Endothelial cell of umbilical vein (primary cell): ENCODE measurements at regions of chr2 and their contacts with region 1.

Region 1: DNA sequence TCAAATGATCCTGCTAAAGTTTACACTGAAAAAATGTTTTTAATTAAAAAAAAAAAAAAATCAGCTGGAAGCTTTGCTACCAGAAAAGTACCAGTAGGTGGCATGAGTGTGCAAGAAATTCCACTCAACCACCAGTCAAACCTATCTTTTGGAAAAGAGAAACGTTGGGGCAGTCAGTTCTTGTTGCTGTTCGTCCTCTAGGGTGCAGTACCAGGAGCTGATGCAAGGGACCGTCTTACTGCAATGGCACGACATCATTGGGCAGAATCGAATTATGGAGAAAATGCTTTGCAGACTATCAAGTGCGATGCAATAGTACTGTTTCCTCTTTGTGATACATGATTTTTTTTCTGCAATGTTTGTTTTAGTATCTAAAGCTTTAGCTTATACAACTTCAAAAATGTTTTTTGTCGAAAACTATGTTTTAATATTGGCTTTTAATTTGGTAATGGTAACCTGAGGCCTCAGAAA is 18.3 kb downstream of the YPEL5 start:
- DNase-seq: peak; percentile 87
- H3K4me3 ChIP-seq: no peak overlapping the region
- H3K27ac ChIP-seq: no peak overlapping the region
- H3K4me1 ChIP-seq: no peaks in the 10 kb centered on the region
- H3K27me3 ChIP-seq: peaks cover 0 to 1% of the 10 kb centered on the region in 2 experiments
- CTCF ChIP-seq: peak; percentile 75 to 82
- POLR2A ChIP-seq: no peak

Region 2: GRCh38 chr2:30136764-30137444 is 28.2 kb before region 1 on chr2:
- CTCF ChIA-PET with region 1: interaction called, 11 read pairs
- POLR2A ChIA-PET with region 1: no interaction called
- dilution Hi-C with region 1: no loop called
- intact Hi-C with region 1: no loop called
- DNase-seq: peak; percentile 37
- H3K4me3 ChIP-seq: no peak overlapping the region
- H3K27ac ChIP-seq: no peak overlapping the region
- H3K4me1 ChIP-seq: peaks cover 4% of the 10 kb centered on the region
- H3K27me3 ChIP-seq: peaks cover 0 to 14% of the 10 kb centered on the region in 2 experiments
- CTCF ChIP-seq: no peak
- POLR2A ChIP-seq: no peak

Region 3: GRCh38 chr2:30178618-30179434 is 13.7 kb after region 1 on chr2:
- CTCF ChIA-PET with region 1: interaction called, 13 read pairs
- POLR2A ChIA-PET with region 1: no interaction called
- dilution Hi-C with region 1: no loop called
- intact Hi-C with region 1: no loop called
- DNase-seq: peak; percentile 34
- H3K4me3 ChIP-seq: no peak overlapping the region
- H3K27ac ChIP-seq: no peak overlapping the region
- H3K4me1 ChIP-seq: no peaks in the 10 kb centered on the region
- H3K27me3 ChIP-seq: no peaks in the 10 kb centered on the region
- CTCF ChIP-seq: no peak
- POLR2A ChIP-seq: no peak

Region 4: GRCh38 chr2:30231212-30231995 is 66.3 kb after region 1 on chr2 and contains the start of gene LBH:
- CTCF ChIA-PET with region 1: interaction called, 8 read pairs
- POLR2A ChIA-PET with region 1: no interaction called
- dilution Hi-C with region 1: no loop called
- intact Hi-C with region 1: loop called (anchors 5 kb)
- DNase-seq: peak; percentile 72
- H3K4me3 ChIP-seq: peak within 1 kb of the TSS; percentile 51 to 58 (median 53)
- H3K27ac ChIP-seq: no peak within 1 kb of the TSS
- H3K4me1 ChIP-seq: peaks cover 9% of the 10 kb centered on the region
- H3K27me3 ChIP-seq: peaks cover 21 to 22% of the 10 kb centered on the region in 2 experiments
- CTCF ChIP-seq: peak in 1 of 2 donors; percentile 3
- POLR2A ChIP-seq: peak; percentile 86
- total RNA-seq, gene LBH: 2.9 and 5.5 TPM in 2 replicates

Region 5: DNA sequence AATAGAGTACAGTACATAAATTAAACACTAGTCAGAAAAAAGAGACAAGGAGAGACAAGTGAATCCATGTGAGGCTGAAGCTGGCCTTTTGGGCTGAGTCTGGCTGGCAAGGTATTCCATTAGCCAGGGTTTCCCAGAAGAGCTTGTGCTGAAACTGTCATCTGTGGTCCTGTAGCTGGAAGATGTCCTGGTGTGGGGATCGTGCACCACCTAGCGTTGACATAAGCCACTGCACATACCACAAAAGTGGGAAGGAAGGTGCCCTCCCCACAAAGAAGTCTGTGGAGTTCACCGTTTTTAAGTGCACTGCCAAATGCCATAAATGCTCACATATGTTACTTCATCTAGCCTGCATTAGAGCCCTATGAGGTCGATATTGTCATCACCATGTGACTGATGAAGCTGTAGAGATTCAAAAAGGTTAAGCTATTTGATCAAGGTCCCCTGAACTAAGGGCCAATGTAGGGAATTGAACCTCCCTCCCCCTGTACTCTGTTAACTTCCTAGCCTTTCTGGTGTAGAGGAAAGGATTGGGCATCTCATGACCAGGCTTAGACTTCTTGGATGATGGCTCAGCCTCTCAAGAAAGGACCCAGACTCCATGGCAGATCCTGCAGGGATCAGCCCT is 1005.1 kb after region 1 on chr2:
- CTCF ChIA-PET with region 1: interaction called, 12 read pairs
- POLR2A ChIA-PET with region 1: no interaction called
- dilution Hi-C with region 1: no loop called
- intact Hi-C with region 1: loop called (anchors 1 kb)
- DNase-seq: peak; percentile 47
- H3K4me3 ChIP-seq: no peak overlapping the region
- H3K27ac ChIP-seq: no peak overlapping the region
- H3K4me1 ChIP-seq: no peaks in the 10 kb centered on the region
- H3K27me3 ChIP-seq: no peaks in the 10 kb centered on the region
- CTCF ChIP-seq: peak; percentile 83 to 88
- POLR2A ChIP-seq: no peak